Left colon (tissue), 2 donors: ENCODE measurements at regions of chr9 and their contacts with region 1.

Region 1: DNA sequence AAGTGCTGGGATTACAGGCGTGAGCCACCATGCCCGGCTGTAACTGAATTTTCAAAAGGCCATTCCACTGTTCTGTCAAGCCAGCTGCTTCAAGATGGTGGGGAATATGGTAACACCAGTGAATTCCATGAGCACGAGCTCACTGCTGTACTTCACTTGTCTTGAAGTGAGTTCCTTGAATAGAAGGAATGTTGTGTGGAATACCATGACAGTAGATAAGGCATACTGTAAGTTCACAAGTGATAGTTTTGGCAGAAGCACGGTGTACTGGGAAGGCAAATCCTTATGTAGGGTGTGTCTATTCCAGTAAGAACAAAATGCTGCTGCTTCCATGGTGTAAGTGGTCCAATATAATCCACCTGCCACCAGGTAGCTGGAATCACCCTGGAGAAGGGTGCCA is 6.6 kb upstream of the PRXL2C start:
- DNase-seq: no peak
- ATAC-seq: no peak

Region 2: DNA sequence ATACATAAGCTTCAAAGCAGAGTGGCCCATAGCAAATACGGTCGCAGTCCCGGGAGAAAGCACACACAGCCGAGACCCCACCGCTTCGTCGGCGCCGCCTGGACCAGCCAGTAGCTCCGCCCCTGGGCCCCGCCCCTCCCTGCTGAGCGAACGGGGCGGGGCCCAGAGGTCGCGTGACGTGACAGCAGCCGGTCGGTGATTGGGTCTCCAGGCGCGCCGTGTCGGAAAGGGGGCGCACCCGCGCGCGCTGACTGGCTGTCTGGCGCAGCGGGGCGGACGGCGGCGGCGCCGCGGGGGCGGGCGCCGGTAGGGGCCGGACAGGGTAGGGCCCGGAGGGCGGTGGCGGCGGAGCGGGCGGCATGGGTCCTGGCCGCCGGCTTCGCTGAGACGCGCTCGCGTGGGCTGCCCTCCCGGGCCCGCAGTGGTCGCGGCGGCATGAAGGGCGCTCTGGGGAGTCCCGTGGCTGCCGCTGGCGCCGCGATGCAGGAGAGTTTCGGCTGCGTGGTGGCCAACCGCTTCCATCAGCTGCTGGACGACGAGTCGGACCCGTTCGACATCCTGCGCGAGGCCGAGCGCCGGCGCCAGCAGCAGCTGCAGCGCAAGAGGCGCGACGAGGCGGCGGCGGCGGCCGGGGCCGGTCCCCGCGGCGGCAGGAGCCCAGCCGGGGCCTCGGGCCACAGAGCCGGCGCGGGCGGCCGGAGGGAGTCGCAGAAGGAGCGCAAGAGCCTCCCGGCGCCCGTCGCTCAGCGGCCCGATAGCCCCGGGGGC is 211.7 kb before region 1 on chr9 and contains the start of gene HABP4:
- intact Hi-C with region 1: loop called in 1 of 2 experiments (anchors 10 kb)
- DNase-seq: peak; percentile 95 to 99
- ATAC-seq: peak; percentile 98
- total RNA-seq, gene HABP4: 2.0 to 4.3 TPM

Region 3: DNA sequence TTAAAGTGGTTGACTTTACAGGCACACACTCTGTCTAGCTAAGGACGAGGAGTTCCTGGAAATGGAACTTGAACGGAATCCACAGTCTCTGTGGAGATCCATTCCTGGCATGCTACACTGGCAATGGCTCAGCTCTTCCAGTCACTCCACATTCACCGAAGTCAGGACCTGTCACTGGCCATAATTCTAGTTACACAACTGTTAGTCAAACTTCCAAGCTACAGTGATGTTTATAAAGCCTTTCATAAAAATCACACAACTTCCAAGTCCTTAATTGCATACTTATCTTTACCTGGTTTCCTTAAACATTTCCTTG is 57.7 kb before region 1 on chr9:
- intact Hi-C with region 1: no loop called
- DNase-seq: no peak
- ATAC-seq: no peak